WTC11 (cell line): ENCODE measurements at regions of chr5 and their contacts with region 1.

Region 1: GRCh38 chr5:133610489-133611356 is 1.6 kb downstream of the FSTL4 start:
- DNase-seq: peak; percentile 83
- ATAC-seq: peak; percentile 84
- H3K4me3 Mint-ChIP-seq: peak overlapping the region; percentile 69
- H3K27ac Mint-ChIP-seq: no peak overlapping the region
- H3K4me1 Mint-ChIP-seq: peaks cover 15% of the 10 kb centered on the region
- H3K27me3 Mint-ChIP-seq: peaks cover 64% of the 10 kb centered on the region
- CTCF ChIP-seq: 0 out of 2 replicates have a peak, but pooled peaks have one; percentile 23

Region 2: DNA sequence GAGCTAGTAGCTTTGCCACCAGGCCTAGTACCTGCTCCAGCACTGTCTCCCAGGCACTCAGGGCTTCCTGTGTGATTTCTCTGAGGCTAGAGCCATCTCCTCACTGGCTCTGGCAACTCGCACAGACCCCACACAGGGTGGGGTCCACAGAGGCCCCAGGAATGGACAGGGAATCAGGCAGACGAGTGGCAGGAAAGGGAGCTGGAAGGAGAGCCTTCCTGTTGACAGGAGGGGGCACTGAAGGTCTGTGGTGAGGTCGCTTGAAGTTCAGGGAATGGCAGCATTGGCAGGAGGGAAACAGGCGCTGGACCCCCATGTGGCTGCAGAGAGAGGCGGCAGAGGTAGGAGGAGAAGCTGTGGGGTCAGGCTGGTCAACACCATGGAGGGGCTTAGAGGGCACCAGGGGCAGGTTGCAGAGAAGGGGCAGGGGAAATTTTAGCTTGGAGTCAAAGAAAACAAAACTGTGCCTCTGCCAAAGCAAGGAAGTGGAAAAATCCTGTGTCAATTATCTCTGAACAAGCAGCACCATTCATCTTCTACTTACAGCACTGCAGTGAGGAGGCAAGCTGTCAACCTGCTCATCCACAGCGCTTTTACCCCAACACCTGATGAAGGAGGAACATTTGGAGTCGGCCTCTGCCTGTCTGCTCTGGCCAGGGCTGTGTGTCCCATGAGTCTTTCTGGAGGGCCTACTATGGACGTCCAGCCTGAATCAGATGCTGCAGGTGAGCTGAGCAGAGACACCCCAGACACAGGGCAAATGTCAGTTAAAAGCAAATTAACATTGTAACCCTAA is 268.6 kb before region 1 on chr5:
- CTCF ChIA-PET with region 1: interaction called, 10 read pairs
- POLR2A ChIA-PET with region 1: no interaction called
- DNase-seq: peak; percentile 29
- ATAC-seq: peak; percentile 68
- H3K4me3 Mint-ChIP-seq: no peak overlapping the region
- H3K27ac Mint-ChIP-seq: no peak overlapping the region
- H3K4me1 Mint-ChIP-seq: peaks cover 63% of the 10 kb centered on the region
- H3K27me3 Mint-ChIP-seq: peaks cover 21% of the 10 kb centered on the region
- CTCF ChIP-seq: no peak

Region 3: GRCh38 chr5:133539818-133540217 is 70.9 kb before region 1 on chr5:
- CTCF ChIA-PET with region 1: no interaction called
- POLR2A ChIA-PET with region 1: no interaction called
- DNase-seq: no peak
- ATAC-seq: no peak
- H3K4me3 Mint-ChIP-seq: no peak overlapping the region
- H3K27ac Mint-ChIP-seq: no peak overlapping the region
- H3K4me1 Mint-ChIP-seq: peaks cover 10% of the 10 kb centered on the region; the same call in 1 of the 2 replicates
- H3K27me3 Mint-ChIP-seq: no peaks in the 10 kb centered on the region
- CTCF ChIP-seq: no peak

Region 4: GRCh38 chr5:133552931-133553525 is 57.7 kb before region 1 on chr5:
- CTCF ChIA-PET with region 1: interaction called, 12 read pairs
- POLR2A ChIA-PET with region 1: no interaction called
- DNase-seq: peak; percentile 79
- ATAC-seq: peak; percentile 99
- H3K4me3 Mint-ChIP-seq: no peak overlapping the region
- H3K27ac Mint-ChIP-seq: no peak overlapping the region
- H3K4me1 Mint-ChIP-seq: peaks cover 18% of the 10 kb centered on the region
- H3K27me3 Mint-ChIP-seq: no peaks in the 10 kb centered on the region
- CTCF ChIP-seq: peak; percentile 79

Region 5: DNA sequence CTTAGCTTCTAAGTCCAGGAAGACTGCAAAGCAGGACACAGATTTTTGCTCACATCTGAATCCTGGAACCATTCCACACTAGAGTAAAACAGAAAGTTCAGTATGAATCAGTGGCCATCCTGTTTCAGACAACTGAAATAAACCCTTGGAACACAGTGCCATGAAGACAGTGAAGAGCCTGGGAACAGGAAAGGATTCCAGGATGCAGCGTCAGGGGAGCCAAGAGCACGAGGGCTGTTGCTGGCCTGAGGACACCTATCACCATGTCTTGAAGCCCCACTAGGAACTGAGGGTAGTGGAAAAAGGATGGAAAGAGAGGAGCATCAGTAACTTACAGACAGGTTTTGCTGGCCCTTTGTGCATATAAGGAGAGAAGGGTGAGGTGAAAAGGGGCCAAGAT is 116.9 kb after region 1 on chr5:
- CTCF ChIA-PET with region 1: no interaction called
- POLR2A ChIA-PET with region 1: no interaction called
- DNase-seq: no peak
- ATAC-seq: no peak
- H3K4me3 Mint-ChIP-seq: no peak overlapping the region
- H3K27ac Mint-ChIP-seq: no peak overlapping the region
- H3K4me1 Mint-ChIP-seq: no peaks in the 10 kb centered on the region
- H3K27me3 Mint-ChIP-seq: peaks cover 2% of the 10 kb centered on the region
- CTCF ChIP-seq: no peak

Region 6: DNA sequence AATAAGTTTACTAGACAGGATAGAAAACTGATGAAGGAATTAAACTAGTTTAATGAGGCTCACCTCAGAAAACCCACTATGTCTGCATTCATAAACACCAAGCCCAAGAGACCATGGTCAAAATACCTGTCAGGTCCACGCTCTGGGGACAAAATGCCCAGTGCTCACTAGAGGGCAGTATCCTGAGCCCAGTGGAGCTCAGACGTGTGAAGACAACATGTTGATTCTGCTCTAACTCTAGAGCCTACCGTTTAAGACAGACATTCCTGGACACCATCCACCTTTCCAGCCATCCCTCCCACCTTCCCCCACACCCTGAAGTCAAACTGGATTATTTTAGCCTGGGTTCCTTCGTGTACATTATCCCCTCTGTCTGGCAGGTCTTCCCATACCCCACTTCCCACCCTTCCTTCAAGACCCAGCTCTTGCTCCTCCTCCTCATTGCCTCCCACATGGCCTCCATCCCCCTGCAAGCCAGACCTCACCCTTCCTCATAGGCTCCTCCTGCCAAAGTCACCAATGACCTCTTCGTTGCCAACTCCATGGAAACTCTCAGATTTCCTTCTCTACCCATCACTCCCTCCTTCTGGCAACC is 143.9 kb after region 1 on chr5:
- CTCF ChIA-PET with region 1: interaction called, 10 read pairs
- POLR2A ChIA-PET with region 1: no interaction called
- DNase-seq: peak; percentile 62
- ATAC-seq: peak; percentile 91
- H3K4me3 Mint-ChIP-seq: no peak overlapping the region
- H3K27ac Mint-ChIP-seq: no peak overlapping the region
- H3K4me1 Mint-ChIP-seq: no peaks in the 10 kb centered on the region
- H3K27me3 Mint-ChIP-seq: peaks cover 20% of the 10 kb centered on the region
- CTCF ChIP-seq: no peak